ENCODE measurements at regions of chr1 and their contacts with region 1.

Region 1: GRCh38 chr1:152869808-152870419 is 8.2 kb upstream of the SMCP start:
- DNase-seq: peak; percentile 47
- ATAC-seq: peak; percentile 91
- H3K4me3 ChIP-seq: no peak overlapping the region
- H3K27ac ChIP-seq: no peak overlapping the region
- H3K4me1 ChIP-seq: no peaks in the 10 kb centered on the region
- H3K27me3 ChIP-seq: no peaks in the 10 kb centered on the region; the same call in 1 of the 2 replicates
- CTCF ChIP-seq: peak; percentile 91

Region 2: DNA sequence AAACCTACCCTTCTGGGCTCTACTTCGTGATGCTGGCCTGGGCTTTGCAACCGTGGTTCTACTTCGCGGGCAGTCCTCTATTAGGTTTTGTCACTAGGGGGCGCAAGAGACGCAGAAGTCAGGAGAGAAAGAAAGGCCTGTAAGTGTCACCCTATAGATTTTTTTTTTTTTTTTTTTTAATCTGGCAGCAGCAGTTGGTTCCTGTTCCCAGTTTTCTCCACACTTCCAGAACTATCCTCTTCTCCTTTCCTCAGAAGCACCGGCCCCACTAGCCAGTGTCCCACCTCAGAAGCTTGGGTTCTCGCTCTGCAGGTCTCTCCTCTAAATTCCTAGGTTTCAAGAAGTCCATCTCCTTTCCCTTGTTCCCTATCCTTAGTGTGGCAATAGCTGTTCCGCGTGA is 215.8 kb before region 1 on chr1:
- CTCF ChIA-PET with region 1: interaction called, 3 read pairs
- POLR2A ChIA-PET with region 1: no interaction called
- in situ Hi-C with region 1: no loop called
- intact Hi-C with region 1: loop called (anchors 5 kb)
- DNase-seq: peak; percentile 35
- ATAC-seq: peak; percentile 93
- H3K4me3 ChIP-seq: no peak overlapping the region
- H3K27ac ChIP-seq: no peak overlapping the region
- H3K4me1 ChIP-seq: no peaks in the 10 kb centered on the region
- H3K27me3 ChIP-seq: peaks cover 5% of the 10 kb centered on the region
- CTCF ChIP-seq: peak; percentile 92

Region 3: GRCh38 chr1:152924191-152924590 is 54.3 kb after region 1 on chr1:
- CTCF ChIA-PET with region 1: no interaction called
- POLR2A ChIA-PET with region 1: no interaction called
- in situ Hi-C with region 1: no loop called
- intact Hi-C with region 1: loop called (anchors 5 kb)
- DNase-seq: no peak
- ATAC-seq: no peak
- H3K4me3 ChIP-seq: no peak overlapping the region
- H3K27ac ChIP-seq: no peak overlapping the region
- H3K4me1 ChIP-seq: no peaks in the 10 kb centered on the region
- H3K27me3 ChIP-seq: no peaks in the 10 kb centered on the region
- CTCF ChIP-seq: no peak

Region 4: GRCh38 chr1:152941021-152941711 is 71.3 kb after region 1 on chr1:
- CTCF ChIA-PET with region 1: no interaction called
- POLR2A ChIA-PET with region 1: no interaction called
- in situ Hi-C with region 1: no loop called
- intact Hi-C with region 1: no loop called
- DNase-seq: no peak
- ATAC-seq: no peak
- H3K4me3 ChIP-seq: no peak overlapping the region
- H3K27ac ChIP-seq: no peak overlapping the region
- H3K4me1 ChIP-seq: no peaks in the 10 kb centered on the region
- H3K27me3 ChIP-seq: no peaks in the 10 kb centered on the region
- CTCF ChIP-seq: no peak

Region 5: DNA sequence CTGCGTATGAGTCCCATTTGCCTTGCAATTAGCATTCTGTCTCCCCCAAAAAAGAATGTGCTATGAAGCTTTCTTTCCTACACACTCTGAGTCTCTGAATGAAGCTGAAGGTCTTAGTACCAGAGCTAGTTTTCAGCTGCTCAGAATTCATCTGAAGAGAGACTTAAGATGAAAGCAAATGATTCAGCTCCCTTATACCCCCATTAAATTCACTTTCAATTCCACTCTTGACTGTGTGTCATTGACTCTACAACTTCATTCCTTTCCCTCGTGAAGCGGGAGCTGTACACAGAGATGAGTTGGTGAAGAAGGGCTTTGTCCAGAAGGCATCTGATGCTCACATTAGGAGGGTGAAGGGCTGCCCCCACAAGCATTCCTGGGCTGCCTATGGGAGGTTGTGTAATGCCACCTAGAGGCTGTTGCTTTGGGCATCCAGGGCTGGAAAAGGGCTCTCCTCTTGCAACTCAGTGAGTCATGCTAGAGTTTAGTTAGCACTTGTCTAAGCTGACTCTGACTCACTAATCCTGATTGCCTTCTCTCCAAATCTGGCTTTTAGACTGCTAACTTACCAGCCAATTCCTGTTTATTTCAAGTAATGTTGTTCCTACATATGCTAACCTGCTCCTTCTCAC is 162.9 kb after region 1 on chr1:
- CTCF ChIA-PET with region 1: no interaction called
- POLR2A ChIA-PET with region 1: no interaction called
- in situ Hi-C with region 1: no loop called
- intact Hi-C with region 1: loop called (anchors 10 kb)
- DNase-seq: peak; percentile 18
- ATAC-seq: peak; percentile 53; the same call in 1 of the 2 replicates
- H3K4me3 ChIP-seq: no peak overlapping the region
- H3K27ac ChIP-seq: no peak overlapping the region
- H3K4me1 ChIP-seq: no peaks in the 10 kb centered on the region
- H3K27me3 ChIP-seq: 0 out of 2 replicates have a peak, but pooled peaks cover 2% of the 10 kb centered on the region
- CTCF ChIP-seq: peak; percentile 39

Region 6: DNA sequence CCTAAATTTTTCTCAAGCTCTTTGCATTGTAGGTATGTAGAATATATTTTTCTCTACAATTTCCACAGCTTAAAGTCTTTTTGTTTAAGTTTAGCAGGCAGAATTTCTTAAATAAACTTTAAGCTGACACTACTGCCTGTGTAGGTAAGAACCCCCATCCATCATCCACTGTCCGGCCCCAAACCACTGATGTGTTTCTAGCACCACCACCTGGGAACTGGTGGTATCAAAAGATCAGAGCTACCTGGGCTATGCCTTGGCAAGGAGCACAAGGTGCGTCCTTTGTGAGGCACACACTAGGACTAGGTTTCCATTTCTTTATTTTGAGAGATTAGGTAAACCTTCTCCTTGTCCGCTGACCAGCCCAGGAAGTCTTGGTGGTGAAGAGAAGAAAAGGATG is 322.8 kb after region 1 on chr1:
- CTCF ChIA-PET with region 1: interaction called, 11 read pairs
- POLR2A ChIA-PET with region 1: no interaction called
- in situ Hi-C with region 1: no loop called
- intact Hi-C with region 1: loop called (anchors 2 kb)
- DNase-seq: no peak
- ATAC-seq: peak; percentile 72
- H3K4me3 ChIP-seq: no peak overlapping the region
- H3K27ac ChIP-seq: no peak overlapping the region
- H3K4me1 ChIP-seq: no peaks in the 10 kb centered on the region
- H3K27me3 ChIP-seq: peaks cover 5% of the 10 kb centered on the region
- CTCF ChIP-seq: peak; percentile 73

Region 7: GRCh38 chr1:153220606-153221303 is 350.8 kb after region 1 on chr1:
- CTCF ChIA-PET with region 1: no interaction called
- POLR2A ChIA-PET with region 1: interaction called, 3 read pairs
- in situ Hi-C with region 1: no loop called
- intact Hi-C with region 1: loop called (anchors 1 kb)
- DNase-seq: no peak
- ATAC-seq: no peak
- H3K4me3 ChIP-seq: no peak overlapping the region
- H3K27ac ChIP-seq: no peak overlapping the region
- H3K4me1 ChIP-seq: no peaks in the 10 kb centered on the region; the same call in 1 of the 2 replicates
- H3K27me3 ChIP-seq: peaks cover 5% of the 10 kb centered on the region
- CTCF ChIP-seq: no peak